Heart right ventricle (tissue), 16 donors: ENCODE measurements at regions of chr5 and their contacts with region 1.

Region 1: DNA sequence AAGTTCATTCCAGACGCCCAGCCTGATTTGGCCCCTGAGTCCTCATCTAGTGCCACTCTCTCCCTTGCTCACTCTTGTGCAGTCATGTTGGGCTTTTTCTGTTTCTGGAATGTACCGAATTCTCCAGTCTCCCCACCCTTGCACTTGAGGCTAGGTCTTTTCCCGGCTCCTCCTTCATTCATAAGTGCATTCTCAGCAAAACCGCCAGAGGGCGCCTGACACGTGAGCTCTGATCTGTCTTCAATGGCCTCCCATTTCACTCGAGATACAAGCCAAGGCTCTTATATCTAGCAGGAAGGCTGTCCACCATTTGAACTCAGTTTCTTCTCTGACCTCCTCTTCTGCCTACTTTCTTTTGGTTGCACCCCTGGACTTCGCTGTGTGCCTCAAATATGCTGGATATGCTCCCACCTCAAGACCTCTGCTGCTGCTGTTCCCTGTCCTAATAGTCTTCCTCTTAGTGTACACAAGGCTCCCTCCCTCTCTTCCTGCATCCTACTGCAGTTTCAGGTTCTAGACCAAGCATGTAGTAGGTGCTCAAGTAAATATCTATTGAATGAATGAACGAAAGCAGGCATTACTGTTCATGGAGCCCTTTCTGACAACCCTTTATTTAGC is 568.1 kb upstream of the WWC1 start:
- DNase-seq: peak; percentile 61 to 68
- ATAC-seq: peak; percentile 72 to 94 (median 86)
- H3K4me3 ChIP-seq: no peak overlapping the region
- H3K27ac ChIP-seq: no peak overlapping the region
- H3K4me1 ChIP-seq: peaks cover 0 to 6% (median 0%) of the 10 kb centered on the region in 9 donors
- H3K27me3 ChIP-seq: no peaks in the 10 kb centered on the region
- CTCF ChIP-seq: peak; percentile 70 to 93 (median 88)

Region 2: GRCh38 chr5:167592114-167592513 is 131.2 kb before region 1 on chr5:
- intact Hi-C with region 1: no loop called
- DNase-seq: no peak
- ATAC-seq: no peak
- H3K4me3 ChIP-seq: no peak overlapping the region
- H3K27ac ChIP-seq: no peak overlapping the region
- H3K4me1 ChIP-seq: no peaks in the 10 kb centered on the region
- H3K27me3 ChIP-seq: no peaks in the 10 kb centered on the region
- CTCF ChIP-seq: no peak

Region 3: DNA sequence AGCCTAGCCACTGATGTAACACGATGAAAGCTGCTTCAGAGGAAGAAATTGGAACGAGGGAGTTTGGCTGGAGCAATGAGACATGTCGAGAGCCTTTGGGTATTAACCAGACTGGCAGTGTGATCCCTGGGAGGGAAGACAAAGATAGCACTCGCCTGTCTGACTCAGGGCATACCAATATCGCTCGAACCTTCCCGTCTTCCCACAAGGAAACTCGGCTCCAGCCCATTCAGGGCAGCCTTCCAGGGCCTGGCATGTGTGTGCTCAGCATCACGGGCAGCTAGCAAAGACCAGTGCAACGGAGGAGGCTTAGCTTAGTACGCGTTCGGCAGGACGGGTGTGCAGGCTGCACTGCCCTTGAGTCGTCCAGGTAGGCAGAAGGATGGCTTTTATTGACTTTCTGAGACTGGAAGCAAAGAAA is 211.2 kb after region 1 on chr5:
- intact Hi-C with region 1: loop called in 3 of 10 experiments (anchors 10 kb)
- DNase-seq: peak; percentile 80 to 81
- ATAC-seq: peak; percentile 68 to 96 (median 94)
- H3K4me3 ChIP-seq: peak overlapping the region in 9 of 10 donors; percentile 36 to 61 (median 54)
- H3K27ac ChIP-seq: peak overlapping the region; percentile 51 to 92 (median 82)
- H3K4me1 ChIP-seq: peaks cover 0 to 15% (median 0%) of the 10 kb centered on the region in 9 donors
- H3K27me3 ChIP-seq: no peaks in the 10 kb centered on the region
- CTCF ChIP-seq: no peak

Region 4: DNA sequence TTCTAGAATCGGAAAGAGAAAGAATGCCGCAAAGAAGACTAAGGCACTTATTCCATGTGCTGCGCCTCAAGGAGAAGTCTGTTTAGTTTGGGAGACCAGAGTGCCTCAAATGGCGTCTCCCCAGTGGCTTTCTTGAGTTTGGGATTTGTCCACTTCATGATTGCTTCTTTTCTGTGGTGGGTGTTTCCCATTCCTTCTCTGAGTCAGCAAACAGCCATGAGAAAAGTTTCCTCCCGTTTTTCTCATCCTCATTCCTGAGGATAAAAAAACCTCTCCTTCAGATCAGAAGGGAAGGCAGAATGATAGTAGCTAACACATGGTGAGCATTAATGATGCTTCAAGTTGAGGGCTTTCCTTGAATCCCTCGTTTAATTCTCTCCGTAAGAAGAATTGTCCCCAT is 292.1 kb after region 1 on chr5:
- intact Hi-C with region 1: loop called in 6 of 10 experiments (anchors 5 to 10 kb)
- DNase-seq: no peak
- ATAC-seq: no peak
- H3K4me3 ChIP-seq: no peak overlapping the region
- H3K27ac ChIP-seq: no peak overlapping the region
- H3K4me1 ChIP-seq: peaks cover 0 to 60% (median 18%) of the 10 kb centered on the region in 9 donors
- H3K27me3 ChIP-seq: peaks cover 0 to 6% (median 0%) of the 10 kb centered on the region in 7 donors
- CTCF ChIP-seq: no peak

Region 5: DNA sequence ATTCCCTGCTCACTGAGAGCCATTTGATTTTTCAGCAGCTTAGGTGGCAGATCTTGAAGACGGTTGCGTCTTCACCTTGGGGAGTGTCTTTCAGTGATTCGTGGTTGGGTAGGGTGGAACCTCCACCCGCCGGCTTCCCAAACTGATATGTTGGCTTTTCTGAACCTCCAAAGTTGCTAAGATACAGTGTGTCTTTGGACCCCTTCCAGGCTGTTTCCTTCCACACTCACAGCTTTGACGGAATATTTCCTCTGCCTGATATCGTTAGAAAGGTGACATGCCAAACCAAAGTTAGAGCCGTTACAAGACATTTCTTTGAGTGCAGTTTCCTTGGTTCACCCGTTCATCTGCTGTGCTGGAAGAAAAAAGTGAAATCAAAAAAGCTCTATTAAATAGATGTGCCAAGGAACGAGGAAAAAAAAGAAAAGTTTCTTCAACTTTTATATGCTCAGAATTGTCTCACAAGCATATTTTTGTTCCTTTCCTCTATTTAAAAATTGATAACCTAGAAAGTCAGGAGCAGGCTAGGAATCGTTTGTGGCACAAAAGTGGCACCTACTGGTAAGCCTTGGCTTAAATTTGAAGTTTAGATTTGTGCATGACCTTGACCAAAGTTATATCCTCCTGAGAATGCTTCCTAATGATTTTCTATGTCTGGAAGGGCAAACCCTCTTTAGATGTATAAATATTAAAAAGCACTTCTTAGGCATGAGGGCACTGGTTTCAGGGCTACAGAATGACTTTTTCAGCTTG is 297.4 kb after region 1 on chr5:
- intact Hi-C with region 1: loop called in 6 of 10 experiments (anchors 5 to 10 kb)
- DNase-seq: peak in 1 of 2 donors; percentile 13
- ATAC-seq: peak in 1 of 8 donors; percentile 50
- H3K4me3 ChIP-seq: no peak overlapping the region
- H3K27ac ChIP-seq: peak overlapping the region; percentile 1 to 72 (median 51)
- H3K4me1 ChIP-seq: peaks cover 0 to 73% (median 29%) of the 10 kb centered on the region in 9 donors
- H3K27me3 ChIP-seq: peaks cover 0 to 11% (median 0%) of the 10 kb centered on the region in 7 donors
- CTCF ChIP-seq: peak in 6 of 9 donors; percentile 7 to 50 (median 42)

Region 6: DNA sequence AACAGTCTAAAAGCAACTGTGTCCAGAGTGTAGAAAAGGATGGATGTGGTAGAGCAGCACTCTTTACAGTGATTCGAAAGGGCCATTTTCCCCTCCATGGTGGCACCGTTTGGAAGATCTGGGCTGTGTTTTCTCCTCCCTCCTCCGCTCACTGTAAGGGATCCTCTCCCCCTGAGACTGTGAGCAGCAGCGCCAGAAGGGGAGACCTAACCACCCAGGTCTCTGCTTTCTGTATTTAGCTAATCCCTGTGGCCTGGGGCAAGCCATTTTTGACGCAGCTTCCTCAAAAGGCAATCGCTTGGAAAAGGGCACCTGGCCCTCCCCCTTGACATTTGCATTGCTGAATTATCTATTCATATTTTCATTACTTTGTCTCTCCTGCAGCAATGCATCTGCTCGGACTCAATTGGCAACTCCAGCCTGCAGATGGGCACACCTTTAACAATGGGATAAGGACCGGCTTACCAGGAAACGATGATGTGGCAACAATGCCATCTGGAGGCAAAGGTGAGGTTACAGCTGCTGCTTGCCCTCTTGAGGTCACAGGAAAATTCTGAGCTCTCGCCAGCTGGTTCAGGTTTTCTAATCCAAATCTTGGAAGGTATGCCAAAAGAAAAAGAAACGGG is 323.8 kb after region 1 on chr5:
- intact Hi-C with region 1: loop called in 4 of 10 experiments (anchors 10 kb)
- DNase-seq: peak in 1 of 2 donors; percentile 58
- ATAC-seq: peak; percentile 57 to 87 (median 82)
- H3K4me3 ChIP-seq: no peak overlapping the region
- H3K27ac ChIP-seq: peak overlapping the region in 5 of 10 donors; percentile 8 to 41 (median 31)
- H3K4me1 ChIP-seq: peaks cover 0 to 29% (median 15%) of the 10 kb centered on the region in 9 donors
- H3K27me3 ChIP-seq: no peaks in the 10 kb centered on the region
- CTCF ChIP-seq: peak in 6 of 9 donors; percentile 33 to 61 (median 51)